ENCODE measurements at regions of chr15 and their contacts with region 1.

Region 1: GRCh38 chr15:76190834-76191538 is 120.3 kb downstream of the ETFA start:
- DNase-seq: peak; percentile 83 to 98
- ATAC-seq: peak; percentile 84 to 93
- H3K4me3 ChIP-seq: peak overlapping the region; percentile 18; the same call in 1 of the 3 replicates
- H3K27ac ChIP-seq: peak overlapping the region; percentile 22 to 60; a peak in 4 of 6 replicates
- H3K4me1 ChIP-seq: peaks cover 15% of the 10 kb centered on the region
- CTCF ChIP-seq: peak; percentile 97
- EP300 ChIP-seq: no peak
- POLR2A ChIP-seq: no peak
- RAD21 ChIP-seq: peak; percentile 97 to 98

Region 2: GRCh38 chr15:76098685-76099084 is 92.3 kb before region 1 on chr15:
- CTCF ChIA-PET with region 1: no interaction called
- POLR2A ChIA-PET with region 1: no interaction called
- DNase-seq: no peak
- ATAC-seq: no peak
- H3K4me3 ChIP-seq: no peak overlapping the region
- H3K27ac ChIP-seq: no peak overlapping the region
- H3K4me1 ChIP-seq: no peaks in the 10 kb centered on the region
- CTCF ChIP-seq: no peak
- EP300 ChIP-seq: no peak
- POLR2A ChIP-seq: no peak
- RAD21 ChIP-seq: no peak

Region 3: GRCh38 chr15:76177491-76178040 is 13.4 kb before region 1 on chr15:
- CTCF ChIA-PET with region 1: interaction called, 34 read pairs
- POLR2A ChIA-PET with region 1: interaction called, 3 read pairs
- DNase-seq: peak; percentile 52 to 56
- ATAC-seq: peak; percentile 64 to 79
- H3K4me3 ChIP-seq: no peak overlapping the region
- H3K27ac ChIP-seq: peak overlapping the region; percentile 47 to 67; a peak in 5 of 6 replicates
- H3K4me1 ChIP-seq: peaks cover 11% of the 10 kb centered on the region; the same call in 2 of the 3 replicates
- CTCF ChIP-seq: no peak
- EP300 ChIP-seq: no peak
- POLR2A ChIP-seq: no peak
- RAD21 ChIP-seq: no peak

Region 4: GRCh38 chr15:76217029-76217428 is 26.0 kb after region 1 on chr15:
- CTCF ChIA-PET with region 1: interaction called, 115 read pairs
- POLR2A ChIA-PET with region 1: no interaction called
- DNase-seq: peak in 1 of 2 experiments; percentile 38
- ATAC-seq: peak in 1 of 2 experiments; percentile 67; a peak in 3 of 6 replicates
- H3K4me3 ChIP-seq: 0 out of 3 replicates have a peak overlapping the region, but pooled peaks have one; percentile 5
- H3K27ac ChIP-seq: peak overlapping the region in 1 of 2 experiments; percentile 29; a peak in 4 of 6 replicates
- H3K4me1 ChIP-seq: peaks cover 19% of the 10 kb centered on the region
- CTCF ChIP-seq: no peak
- EP300 ChIP-seq: no peak
- POLR2A ChIP-seq: no peak
- RAD21 ChIP-seq: no peak

Region 5: DNA sequence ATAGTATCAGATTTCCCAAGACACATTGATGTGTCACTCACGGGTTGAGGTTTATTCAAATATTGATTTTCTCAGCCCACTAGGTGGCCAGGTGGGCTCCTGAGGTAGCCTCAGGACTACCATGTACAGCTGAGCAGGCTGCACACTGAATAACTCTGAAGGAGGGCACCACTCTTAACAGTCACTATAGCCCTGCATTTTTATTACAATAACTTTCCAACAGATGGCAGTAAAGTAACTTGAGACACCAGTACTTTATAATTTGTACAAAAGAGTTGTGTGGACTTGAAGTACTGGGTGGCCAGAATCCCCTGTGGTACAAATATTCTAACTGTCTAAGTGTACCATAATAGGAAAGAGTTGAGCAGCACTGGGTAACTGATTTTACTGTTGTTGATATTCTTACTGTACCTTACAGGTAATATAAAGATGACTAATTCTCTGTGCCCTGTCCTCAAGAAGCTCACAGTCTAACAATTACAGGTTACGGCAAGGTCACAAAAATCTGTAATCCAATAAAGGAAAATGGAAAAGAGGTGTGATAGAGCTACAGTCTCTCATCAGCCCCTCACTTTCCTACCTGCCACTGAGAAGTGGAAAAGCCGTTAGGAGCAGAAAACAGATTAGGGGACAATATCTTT is 44.3 kb after region 1 on chr15:
- CTCF ChIA-PET with region 1: interaction called, 25 read pairs
- POLR2A ChIA-PET with region 1: no interaction called
- DNase-seq: peak; percentile 39 to 66
- ATAC-seq: peak; percentile 91 to 98
- H3K4me3 ChIP-seq: no peak overlapping the region
- H3K27ac ChIP-seq: no peak overlapping the region
- H3K4me1 ChIP-seq: no peaks in the 10 kb centered on the region
- CTCF ChIP-seq: peak; percentile 81
- EP300 ChIP-seq: no peak
- POLR2A ChIP-seq: no peak
- RAD21 ChIP-seq: peak; percentile 81 to 83

Region 6: GRCh38 chr15:76293361-76293760 is 102.4 kb after region 1 on chr15:
- CTCF ChIA-PET with region 1: interaction called, 18 read pairs
- POLR2A ChIA-PET with region 1: no interaction called
- DNase-seq: no peak
- ATAC-seq: 0 out of 6 replicates have a peak, but pooled peaks of 1 of the 2 experiments have one; percentile 30
- H3K4me3 ChIP-seq: no peak overlapping the region
- H3K27ac ChIP-seq: no peak overlapping the region
- H3K4me1 ChIP-seq: peaks cover 9% of the 10 kb centered on the region; the same call in 2 of the 3 replicates
- CTCF ChIP-seq: no peak
- EP300 ChIP-seq: no peak
- POLR2A ChIP-seq: no peak
- RAD21 ChIP-seq: no peak

Region 7: DNA sequence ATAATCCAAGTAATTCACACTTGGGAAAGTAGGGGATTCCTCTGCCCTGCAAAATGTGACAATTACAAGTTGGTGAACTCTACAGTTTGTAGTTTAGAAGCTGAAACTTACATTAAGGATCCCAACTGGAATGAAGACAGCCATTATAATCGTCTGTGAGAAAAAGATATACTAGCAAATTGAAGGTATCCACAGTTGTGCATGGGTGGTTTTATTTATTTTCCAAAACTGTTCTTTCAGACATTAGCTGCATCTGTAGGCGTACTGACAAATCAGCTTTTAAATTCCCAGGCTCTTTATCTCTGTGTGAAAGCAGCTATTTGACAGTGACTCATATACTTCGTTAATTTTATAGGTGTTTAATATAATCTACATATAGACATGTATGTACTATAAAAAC is 133.1 kb after region 1 on chr15:
- CTCF ChIA-PET with region 1: interaction called, 44 read pairs
- POLR2A ChIA-PET with region 1: no interaction called
- DNase-seq: no peak
- ATAC-seq: no peak
- H3K4me3 ChIP-seq: no peak overlapping the region
- H3K27ac ChIP-seq: no peak overlapping the region
- H3K4me1 ChIP-seq: peaks cover 34% of the 10 kb centered on the region
- CTCF ChIP-seq: no peak
- EP300 ChIP-seq: no peak
- POLR2A ChIP-seq: no peak
- RAD21 ChIP-seq: no peak

Region 8: GRCh38 chr15:76336254-76337058 is 145.5 kb after region 1 on chr15 and contains the start of gene ISL2:
- CTCF ChIA-PET with region 1: interaction called, 44 read pairs
- POLR2A ChIA-PET with region 1: interaction called, 6 read pairs
- DNase-seq: peak; percentile 99 to 100
- ATAC-seq: peak; percentile 90 to 95
- H3K4me3 ChIP-seq: peak within 1 kb of the TSS; percentile 75
- H3K27ac ChIP-seq: peak within 1 kb of the TSS; percentile 94 to 97
- H3K4me1 ChIP-seq: peaks cover 31% of the 10 kb centered on the region
- CTCF ChIP-seq: no peak
- EP300 ChIP-seq: 0 out of 5 replicates have a peak, but pooled peaks of 1 of the 2 experiments have one; percentile 9
- POLR2A ChIP-seq: peak; percentile 95
- RAD21 ChIP-seq: peak in 1 of 2 experiments; percentile 8; a peak in 2 of 5 replicates
- polyA plus RNA-seq, gene ISL2: 2.6 TPM in 2 replicates